Vagina (tissue), 2 donors: ENCODE measurements at regions of chr11 and their contacts with region 1.

Region 1: DNA sequence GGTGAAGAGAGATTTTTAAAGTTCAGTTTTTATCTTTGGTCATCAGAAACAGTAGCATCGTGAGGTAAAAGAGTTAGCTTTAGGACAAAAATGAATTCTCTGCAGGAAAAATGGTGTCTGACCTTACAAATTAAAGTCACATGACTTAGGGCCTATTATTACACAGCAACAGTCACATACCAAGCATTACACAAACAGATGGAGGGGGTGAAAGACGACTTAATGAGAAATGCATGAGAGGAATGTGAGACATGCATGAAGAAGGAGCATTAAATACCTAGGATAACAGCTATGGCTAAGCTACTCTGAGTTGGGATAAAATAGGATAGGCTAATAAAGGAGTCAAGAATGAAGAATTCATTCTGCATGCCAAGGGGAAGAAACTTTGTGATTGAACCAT is 77.5 kb downstream of the BLID start:
- DNase-seq: no peak
- H3K4me3 ChIP-seq: no peak overlapping the region
- H3K27ac ChIP-seq: no peak overlapping the region
- H3K4me1 ChIP-seq: no peaks in the 10 kb centered on the region
- H3K27me3 ChIP-seq: no peaks in the 10 kb centered on the region
- CTCF ChIP-seq: no peak
- POLR2A ChIP-seq: no peak

Region 2: DNA sequence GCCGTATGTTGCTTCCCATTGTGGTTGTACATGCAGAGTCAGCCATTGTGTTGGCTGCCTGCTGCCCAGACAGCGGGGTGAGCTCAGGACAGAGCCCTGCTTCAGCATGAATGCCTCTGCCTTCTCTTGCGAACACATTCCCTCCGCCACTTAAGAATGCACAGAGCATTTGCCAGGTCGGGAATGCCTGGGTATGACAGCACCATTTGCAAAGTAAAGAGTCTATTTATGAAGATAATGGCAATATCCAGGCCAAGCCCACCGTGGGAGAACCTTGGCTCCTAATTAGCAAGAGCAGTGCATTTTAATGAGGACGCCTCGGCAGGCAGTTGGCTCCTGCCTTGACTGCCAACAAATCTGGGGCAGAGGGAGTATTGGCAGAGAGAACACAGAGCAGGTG is 648.9 kb before region 1 on chr11:
- intact Hi-C with region 1: no loop called
- DNase-seq: no peak
- H3K4me3 ChIP-seq: no peak overlapping the region
- H3K27ac ChIP-seq: no peak overlapping the region
- H3K4me1 ChIP-seq: peaks cover 19% of the 10 kb centered on the region
- H3K27me3 ChIP-seq: no peaks in the 10 kb centered on the region
- CTCF ChIP-seq: no peak
- POLR2A ChIP-seq: no peak

Region 3: GRCh38 chr11:122202951-122203456 is 164.5 kb after region 1 on chr11:
- intact Hi-C with region 1: loop called (anchors 10 kb)
- DNase-seq: no peak
- H3K4me3 ChIP-seq: peak overlapping the region; percentile 36 to 55
- H3K27ac ChIP-seq: peak overlapping the region; percentile 67
- H3K4me1 ChIP-seq: peaks cover 23% of the 10 kb centered on the region
- H3K27me3 ChIP-seq: no peaks in the 10 kb centered on the region
- CTCF ChIP-seq: peak; percentile 71 to 97 (median 97)
- POLR2A ChIP-seq: no peak